ENCODE measurements at regions of chr9 and their contacts with region 1.

Region 1: GRCh38 chr9:90929626-90930025 is 128.0 kb downstream of the SYK start:
- DNase-seq: no peak
- H3K4me3 Mint-ChIP-seq: no peak overlapping the region
- H3K27ac Mint-ChIP-seq: no peak overlapping the region
- H3K4me1 Mint-ChIP-seq: no peaks in the 10 kb centered on the region
- H3K27me3 Mint-ChIP-seq: peaks cover 10% of the 10 kb centered on the region

Region 2: DNA sequence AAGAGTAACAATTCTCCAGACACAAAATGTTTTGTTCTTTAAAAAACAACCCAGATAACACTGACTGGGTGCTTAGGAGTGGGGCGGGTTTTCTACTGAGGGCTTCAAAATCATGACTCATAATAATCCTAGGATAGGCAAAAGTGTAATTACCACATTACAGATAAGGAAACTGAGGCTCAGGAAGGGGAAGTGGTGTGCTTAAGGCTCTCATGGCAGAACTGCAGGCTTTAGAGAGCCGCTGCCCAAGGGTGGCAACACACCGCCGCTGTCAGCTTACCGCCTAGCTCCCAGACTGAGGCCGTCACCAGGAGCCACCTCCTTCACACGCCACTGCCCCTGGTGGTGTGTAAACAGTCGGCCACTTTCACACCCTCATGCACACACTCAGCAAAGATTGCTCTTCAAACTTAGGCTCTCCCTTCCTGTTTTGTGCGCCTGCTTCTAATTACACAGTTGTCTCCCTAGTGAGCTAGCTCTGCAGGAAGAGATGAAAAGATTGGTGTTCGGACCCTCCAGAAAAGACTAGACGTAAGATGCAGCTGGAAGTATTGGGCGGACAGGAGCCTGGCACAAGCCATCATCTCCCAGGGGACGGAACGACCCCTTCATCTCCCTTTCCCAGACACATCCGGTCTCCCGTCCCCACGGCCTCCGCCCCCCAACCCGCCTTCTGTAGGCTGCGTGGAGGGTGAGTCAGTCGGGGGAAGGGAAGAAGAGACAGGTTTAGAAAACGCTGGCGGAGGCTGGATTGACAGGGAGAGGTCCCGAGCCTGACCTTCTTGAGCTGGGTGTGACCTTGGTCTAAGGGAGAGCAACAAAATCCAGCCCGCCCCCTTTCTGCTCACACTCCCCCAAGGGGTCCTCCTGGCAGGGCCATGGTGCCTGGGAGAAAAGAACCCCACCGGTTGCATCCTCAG is 34.7 kb after region 1 on chr9:
- intact Hi-C with region 1: loop called (anchors 2 kb)
- DNase-seq: no peak
- H3K4me3 Mint-ChIP-seq: no peak overlapping the region
- H3K27ac Mint-ChIP-seq: no peak overlapping the region
- H3K4me1 Mint-ChIP-seq: peaks cover 46% of the 10 kb centered on the region
- H3K27me3 Mint-ChIP-seq: peaks cover 9% of the 10 kb centered on the region

Measured in activated T-helper 1 cell treated with anti-CD3 and anti-CD28 coated beads, Interleukin-12 subunit alpha, Interleukin-12 subunit beta, Interleukin-2, Interleukin-4 antibody, amounts not matched to agents 30 ng/mL and 10 ng/mL and 1 ng/mL, durations not matched to agents 14 hours and 24 hours and 36 hours (primary cell).